Astrocyte of the cerebellum (primary cell): ENCODE measurements at regions of chr11 and their contacts with region 1.

Region 1: GRCh38 chr11:43619863-43620505 is 60.6 kb upstream of the HSD17B12 start:
- DNase-seq: no peak
- H3K4me3 ChIP-seq: no peak overlapping the region
- CTCF ChIP-seq: no peak

Region 2: GRCh38 chr11:43573233-43573632 is 46.8 kb before region 1 on chr11:
- in situ Hi-C with region 1: loop called (anchors 5 kb)
- DNase-seq: no peak
- H3K4me3 ChIP-seq: no peak overlapping the region
- CTCF ChIP-seq: peak; percentile 40